Activated T-helper 1 cell treated with anti-CD3 and anti-CD28 coated beads, Interleukin-12 subunit alpha, Interleukin-12 subunit beta, Interleukin-2, Interleukin-4 antibody, amounts not matched to agents 30 ng/mL and 10 ng/mL and 1 ng/mL, durations not matched to agents 14 hours and 24 hours and 36 hours (primary cell): ENCODE measurements at regions of chr1 and their contacts with region 1.

Region 1: GRCh38 chr1:244652699-244653466 is at the start of gene DESI2:
- DNase-seq: peak; percentile 98
- H3K4me3 Mint-ChIP-seq: peak within 1 kb of the TSS; percentile 83
- H3K27ac Mint-ChIP-seq: peak within 1 kb of the TSS; percentile 75
- H3K4me1 Mint-ChIP-seq: peaks cover 18% of the 10 kb centered on the region
- H3K27me3 Mint-ChIP-seq: no peaks in the 10 kb centered on the region
- total RNA-seq, gene DESI2: 31.1 and 32.8 TPM in 2 replicates

Region 2: DNA sequence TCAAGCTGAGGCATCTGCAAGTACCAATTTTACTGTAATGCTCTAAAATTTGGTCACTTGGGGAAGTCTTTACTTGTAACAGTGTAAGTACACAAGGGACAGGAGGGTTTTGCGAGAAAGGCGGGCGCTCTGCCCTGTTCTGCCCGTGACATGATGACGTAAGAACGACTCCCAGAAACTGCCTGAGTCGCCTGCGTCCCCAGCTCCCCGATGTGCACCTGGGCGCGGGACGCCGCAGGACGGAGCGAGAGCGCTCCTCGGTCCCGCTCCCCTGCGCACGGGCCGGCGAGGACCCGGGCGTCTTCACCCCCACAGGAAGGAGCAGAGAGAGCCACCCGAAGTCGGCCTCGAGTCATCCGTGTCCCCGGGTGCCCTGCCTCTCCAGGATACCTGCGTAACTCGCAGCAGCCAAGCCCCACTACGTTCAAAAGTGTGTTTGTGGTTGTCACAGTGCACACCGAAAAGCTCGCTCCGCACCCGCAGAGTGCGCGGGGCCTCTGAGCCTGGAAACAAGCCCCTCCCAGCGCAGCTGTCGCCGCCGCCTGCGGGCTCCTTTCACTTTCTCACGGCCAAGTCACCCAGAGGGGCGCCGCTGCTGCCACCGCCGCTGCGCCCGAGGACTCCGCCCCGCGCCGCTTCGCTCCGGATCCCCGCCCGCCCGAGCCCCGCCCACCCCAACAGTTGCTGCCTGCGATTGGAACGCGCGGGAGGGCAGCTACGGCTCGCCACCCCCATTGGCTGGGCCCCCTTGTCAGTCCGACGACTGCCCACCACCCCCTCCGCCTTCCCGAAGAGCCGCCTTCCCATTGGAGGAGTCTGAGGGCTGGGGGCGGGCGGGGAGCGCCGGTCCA is 605.0 kb before region 1 on chr1:
- intact Hi-C with region 1: loop called (anchors 2 kb)
- DNase-seq: peak; percentile 93
- H3K4me3 Mint-ChIP-seq: peak overlapping the region; percentile 92
- H3K27ac Mint-ChIP-seq: peak overlapping the region; percentile 91
- H3K4me1 Mint-ChIP-seq: peaks cover 36% of the 10 kb centered on the region
- H3K27me3 Mint-ChIP-seq: peaks cover 30% of the 10 kb centered on the region

Region 3: DNA sequence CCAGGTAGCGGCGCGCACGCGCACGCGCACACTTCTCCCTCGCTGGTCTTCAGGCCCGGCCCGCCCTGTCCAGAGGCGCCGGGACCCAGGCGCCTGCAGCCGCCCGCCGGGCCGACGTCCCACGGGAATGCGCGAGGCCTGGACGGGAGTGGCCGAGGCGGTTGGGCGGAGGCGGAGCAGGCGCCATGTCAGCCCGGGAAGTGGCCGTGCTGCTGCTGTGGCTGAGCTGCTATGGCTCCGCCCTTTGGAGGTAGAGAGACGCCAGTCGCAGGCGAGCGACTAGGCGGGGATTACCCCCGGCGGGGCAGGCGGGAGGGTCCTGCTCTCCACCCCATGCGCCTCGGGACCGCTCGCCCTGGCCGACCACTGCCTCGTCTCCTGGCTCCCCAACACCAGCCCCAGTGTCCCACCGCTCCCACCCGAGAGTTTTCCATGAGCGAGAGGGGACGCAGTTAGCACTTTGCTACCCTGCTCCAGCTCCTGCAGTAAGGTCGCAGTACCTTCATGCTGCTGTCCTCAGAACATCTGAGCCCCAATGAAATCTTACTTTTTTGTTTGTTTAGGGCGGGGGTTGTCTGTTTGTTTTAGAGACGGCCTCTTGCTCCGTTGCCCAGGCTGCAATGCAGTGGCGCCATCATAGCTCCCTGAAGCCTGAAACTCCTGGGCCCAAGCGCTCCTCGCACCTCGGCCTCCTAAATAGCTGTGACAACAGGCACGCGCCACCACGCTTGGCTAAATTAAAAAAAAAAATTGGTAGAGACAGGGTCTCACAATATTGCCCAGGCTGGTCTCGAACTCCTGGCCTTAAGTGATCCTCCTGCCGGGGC is 191.4 kb before region 1 on chr1 and contains the start of gene CATSPERE:
- intact Hi-C with region 1: loop called (anchors 1 kb)
- DNase-seq: peak; percentile 74
- H3K4me3 Mint-ChIP-seq: peak within 1 kb of the TSS; percentile 85
- H3K27ac Mint-ChIP-seq: peak within 1 kb of the TSS; percentile 87
- H3K4me1 Mint-ChIP-seq: peaks cover 21% of the 10 kb centered on the region
- H3K27me3 Mint-ChIP-seq: no peaks in the 10 kb centered on the region
- total RNA-seq, gene CATSPERE: 0.08 and 0.17 TPM in 2 replicates

Region 4: GRCh38 chr1:244801246-244801645 is 148.4 kb after region 1 on chr1:
- intact Hi-C with region 1: loop called (anchors 2 kb)
- DNase-seq: peak; percentile 6
- H3K4me3 Mint-ChIP-seq: no peak overlapping the region
- H3K27ac Mint-ChIP-seq: no peak overlapping the region
- H3K4me1 Mint-ChIP-seq: peaks cover 8% of the 10 kb centered on the region
- H3K27me3 Mint-ChIP-seq: peaks cover 14% of the 10 kb centered on the region

Region 5: GRCh38 chr1:244970661-244971551 is 318.0 kb after region 1 on chr1:
- intact Hi-C with region 1: loop called (anchors 1 kb)
- DNase-seq: peak; percentile 82
- H3K4me3 Mint-ChIP-seq: peak overlapping the region; percentile 92
- H3K27ac Mint-ChIP-seq: peak overlapping the region; percentile 98
- H3K4me1 Mint-ChIP-seq: peaks cover 21% of the 10 kb centered on the region
- H3K27me3 Mint-ChIP-seq: peaks cover 2% of the 10 kb centered on the region